Naive thymus-derived CD8-positive, alpha-beta T cell (primary cell): ENCODE measurements at regions of chr9 and their contacts with region 1.

Region 1: DNA sequence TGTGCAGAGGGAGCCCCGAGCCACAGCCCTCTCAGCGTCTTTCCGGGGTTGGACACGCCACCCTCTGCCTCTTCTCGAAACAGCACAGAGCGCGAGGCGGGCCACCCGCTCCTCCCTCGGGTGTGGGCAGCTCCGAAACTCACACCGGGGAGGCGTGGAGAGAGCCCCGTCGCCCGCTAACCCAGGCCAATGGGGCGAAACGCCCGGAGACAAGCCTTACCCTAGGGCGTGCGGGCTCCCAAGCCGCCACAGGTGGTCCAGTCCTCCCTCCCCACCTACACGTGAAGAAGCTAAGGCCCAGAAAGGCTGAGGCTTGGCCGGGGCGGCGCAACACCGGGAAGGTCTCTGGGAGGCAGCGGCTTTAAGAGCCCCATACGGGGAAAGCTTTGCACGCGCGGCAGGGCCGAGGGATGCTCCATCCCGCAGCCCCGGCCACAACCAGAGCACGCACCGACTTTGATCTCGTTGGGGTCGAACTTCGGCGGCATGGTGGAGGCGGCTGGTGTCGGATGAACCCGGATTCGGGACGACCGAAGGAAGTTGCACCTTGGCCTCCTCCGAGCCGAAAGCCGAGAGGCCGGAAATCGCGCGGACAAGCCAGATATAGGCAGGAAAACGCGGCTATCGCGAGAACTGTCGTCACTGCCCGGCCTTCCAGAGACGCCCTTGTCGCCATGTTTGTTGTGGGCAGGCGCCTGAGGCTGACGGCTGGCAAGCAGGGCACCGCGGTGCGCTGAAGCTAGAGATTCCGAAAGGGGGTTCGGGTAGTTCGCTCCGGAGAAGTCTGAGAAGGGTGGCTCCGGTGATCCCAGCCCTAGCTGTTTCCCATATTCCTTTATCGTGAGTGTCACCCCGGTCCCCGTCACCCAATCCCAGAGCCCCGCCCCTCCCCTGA is at the starts of genes LRSAM1 and RPL12:
- DNase-seq: peak; percentile 94 to 100 (median 99)
- ATAC-seq: peak; percentile 77 to 85
- H3K4me3 Mint-ChIP-seq: peak within 1 kb of the TSS; percentile 90 to 98 (median 96)
- H3K27ac Mint-ChIP-seq: peak within 1 kb of the TSS; percentile 91 to 98 (median 96)
- H3K4me1 Mint-ChIP-seq: peaks cover 14 to 53% (median 44%) of the 10 kb centered on the region in 4 donors
- H3K27me3 Mint-ChIP-seq: no peaks in the 10 kb centered on the region
- polyA plus RNA-seq, gene LRSAM1: 4.3 to 9.6 (median 5.0) TPM
- polyA plus RNA-seq, gene RPL12: 1,731 to 2,420 (median 2,163) TPM

Region 2: DNA sequence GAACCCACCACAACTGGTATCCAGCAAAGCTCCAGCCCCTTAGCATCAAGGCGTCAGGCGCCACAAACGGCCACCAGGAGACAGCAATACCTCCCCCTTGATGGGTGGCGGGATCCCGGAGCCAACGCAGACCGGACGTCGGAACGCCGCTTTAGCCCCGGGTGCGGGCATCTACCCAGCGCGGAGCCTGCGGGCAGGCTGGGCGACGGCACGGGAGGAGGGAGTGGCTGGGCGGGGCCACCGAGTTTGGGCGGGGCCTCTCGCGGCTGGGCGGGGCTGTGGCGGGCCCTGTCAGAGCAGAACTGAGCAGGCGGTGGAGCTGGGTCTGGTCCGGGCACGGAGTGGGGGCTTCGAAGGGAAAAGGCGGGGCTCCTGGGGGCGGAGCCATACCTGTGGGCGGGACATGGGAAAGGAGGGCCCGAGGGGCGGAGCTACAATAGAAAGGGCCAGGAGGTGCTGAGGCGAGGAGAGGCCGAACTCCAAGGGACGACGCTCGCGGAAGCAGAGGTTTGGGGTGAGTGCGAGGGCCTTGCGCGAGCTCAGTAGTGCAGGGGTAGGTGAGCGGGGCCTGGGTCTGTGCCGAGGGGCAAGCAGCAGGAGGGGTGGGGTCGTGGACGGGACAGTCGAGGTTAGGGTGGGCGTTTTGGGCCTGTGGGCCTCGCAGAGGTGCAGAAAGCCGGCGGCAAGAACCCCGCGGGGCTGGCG is 226.7 kb before region 1 on chr9:
- POLR2A ChIA-PET with region 1: interaction called, 23 read pairs
- DNase-seq: peak; percentile 78 to 91 (median 86)
- ATAC-seq: peak; percentile 69 to 82
- H3K4me3 Mint-ChIP-seq: peak overlapping the region; percentile 77 to 91 (median 87)
- H3K27ac Mint-ChIP-seq: peak overlapping the region; percentile 62 to 98 (median 84)
- H3K4me1 Mint-ChIP-seq: peaks cover 22 to 48% (median 39%) of the 10 kb centered on the region in 4 donors
- H3K27me3 Mint-ChIP-seq: peaks cover 3 to 9% (median 5%) of the 10 kb centered on the region in 5 donors

Region 3: GRCh38 chr9:127423934-127424675 is 27.0 kb before region 1 on chr9 and contains the start of gene ZNF79:
- POLR2A ChIA-PET with region 1: interaction called, 39 read pairs
- DNase-seq: peak; percentile 83 to 93 (median 90)
- ATAC-seq: peak; percentile 89 to 92
- H3K4me3 Mint-ChIP-seq: peak within 1 kb of the TSS; percentile 98 to 100 (median 99)
- H3K27ac Mint-ChIP-seq: peak within 1 kb of the TSS; percentile 92 to 98 (median 97)
- H3K4me1 Mint-ChIP-seq: peaks cover 28 to 54% (median 50%) of the 10 kb centered on the region in 4 donors
- H3K27me3 Mint-ChIP-seq: no peaks in the 10 kb centered on the region
- polyA plus RNA-seq, gene ZNF79: 3.3 to 6.6 (median 4.9) TPM

Region 4: DNA sequence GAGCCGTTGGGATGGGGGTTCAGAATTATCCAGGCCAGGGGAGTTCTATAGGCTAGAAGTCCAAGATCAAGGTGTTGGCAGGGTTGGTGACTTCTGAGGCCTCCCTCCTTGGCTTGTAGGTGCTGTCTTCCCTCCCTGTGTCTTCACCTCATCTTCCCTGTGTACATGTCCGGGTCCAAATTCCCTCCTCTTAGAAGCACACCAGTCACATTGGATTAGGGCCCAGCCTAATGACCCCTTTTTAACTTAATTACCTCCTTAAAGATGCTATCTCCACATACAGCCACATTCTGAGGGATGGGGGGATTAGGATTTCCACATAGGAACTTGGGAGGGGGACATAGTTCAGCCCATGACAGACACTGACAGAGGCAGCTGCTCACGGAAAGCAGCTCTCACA is 12.3 kb after region 1 on chr9:
- POLR2A ChIA-PET with region 1: interaction called, 11 read pairs
- DNase-seq: no peak
- ATAC-seq: no peak
- H3K4me3 Mint-ChIP-seq: no peak overlapping the region
- H3K27ac Mint-ChIP-seq: no peak overlapping the region
- H3K4me1 Mint-ChIP-seq: no peaks in the 10 kb centered on the region
- H3K27me3 Mint-ChIP-seq: no peaks in the 10 kb centered on the region

Region 5: DNA sequence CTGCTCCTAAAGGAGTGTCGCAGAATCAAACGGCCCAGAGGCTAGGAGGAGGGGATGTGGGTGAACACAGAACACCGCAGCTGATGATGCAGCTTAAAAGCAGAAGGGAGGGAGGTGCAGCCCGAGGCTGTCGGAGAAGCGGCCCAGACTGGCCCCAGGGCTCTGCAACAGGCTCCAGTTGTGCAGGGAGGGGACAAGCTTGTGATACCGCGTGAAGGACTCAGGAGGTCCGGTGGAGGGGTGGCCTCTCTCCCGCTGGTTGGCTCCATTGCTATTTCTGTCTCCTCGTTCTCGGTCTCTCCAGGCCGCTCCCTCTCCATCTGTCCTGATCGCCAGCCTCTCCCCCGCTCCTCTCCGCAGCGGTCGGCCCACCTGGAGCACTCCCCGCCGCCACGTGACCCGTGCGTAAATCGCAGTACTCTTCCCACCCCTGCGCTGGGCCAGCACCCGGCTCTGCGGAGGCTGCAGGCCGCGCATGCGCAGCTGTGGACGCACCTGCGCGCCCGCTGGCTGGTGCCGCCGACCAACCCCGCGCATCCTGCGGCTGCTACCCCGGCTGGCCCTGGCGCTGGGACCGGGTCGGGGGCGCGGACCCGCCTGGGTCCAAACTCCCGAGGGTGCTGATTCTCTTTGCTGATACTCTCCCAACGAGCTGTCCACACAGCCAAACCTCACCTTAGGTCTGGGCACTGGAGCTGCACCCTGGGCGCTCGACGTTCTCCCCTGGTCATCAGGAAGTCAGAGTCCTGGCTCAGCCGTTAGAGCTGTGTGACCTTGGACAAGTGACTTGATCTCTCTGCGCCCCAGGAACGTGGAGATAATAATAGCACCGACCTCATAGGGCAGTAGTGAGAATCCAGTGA is 157.3 kb after region 1 on chr9:
- POLR2A ChIA-PET with region 1: interaction called, 10 read pairs
- DNase-seq: peak; percentile 65 to 87 (median 76)
- ATAC-seq: peak; percentile 65 to 66
- H3K4me3 Mint-ChIP-seq: peak overlapping the region; percentile 82 to 92 (median 89)
- H3K27ac Mint-ChIP-seq: peak overlapping the region in 9 of 10 donors; percentile 54 to 96 (median 90)
- H3K4me1 Mint-ChIP-seq: peaks cover 9 to 27% (median 26%) of the 10 kb centered on the region in 4 donors
- H3K27me3 Mint-ChIP-seq: peaks cover 0 to 19% (median 3%) of the 10 kb centered on the region in 5 donors